ENCODE measurements at regions of chr1 and their contacts with region 1.

Region 1: DNA sequence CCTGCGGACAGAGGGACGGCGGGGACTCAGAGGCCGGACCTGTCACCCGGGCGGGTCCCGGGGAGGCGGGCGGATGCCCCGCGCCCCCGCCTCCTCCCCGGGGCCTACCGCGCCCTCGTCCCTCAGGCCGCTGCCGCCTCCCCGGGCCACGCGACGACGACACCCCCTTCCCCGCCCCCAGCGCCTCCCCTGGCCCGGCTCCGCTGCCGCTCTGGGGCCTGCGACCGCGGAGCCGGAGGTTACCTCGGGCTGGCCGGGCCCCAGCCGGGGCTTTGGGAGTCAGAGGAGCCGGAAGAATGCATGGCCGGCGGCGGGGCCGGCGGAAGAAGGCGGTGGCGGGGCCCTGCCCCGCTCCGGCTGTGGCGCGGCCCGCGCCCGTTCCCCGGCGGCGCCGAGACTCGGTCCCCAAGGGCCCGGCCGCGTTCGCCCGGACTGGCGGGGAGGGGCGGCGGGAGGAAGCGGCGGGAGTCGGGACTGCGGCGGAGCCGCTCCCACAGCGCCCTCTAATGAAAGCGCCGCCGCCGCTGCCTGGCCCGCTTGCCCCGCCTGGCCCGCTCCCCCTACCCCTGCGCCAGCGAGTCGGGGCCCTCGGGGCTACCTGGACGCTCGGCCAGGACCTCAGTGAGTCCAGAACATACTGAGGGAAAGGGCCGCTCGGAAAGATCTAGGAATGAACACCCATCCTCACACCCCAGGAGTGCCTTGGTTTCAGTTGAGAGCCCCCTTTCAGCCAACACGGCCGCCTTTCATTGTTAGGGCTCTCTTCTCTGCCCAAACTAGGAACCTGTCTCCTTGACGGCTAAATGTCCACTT is at the start of gene LPGAT1:
- DNase-seq: peak; percentile 84
- H3K4me3 ChIP-seq: peak within 1 kb of the TSS; percentile 45 to 97 (median 92)
- H3K27ac ChIP-seq: peak within 1 kb of the TSS; percentile 83 to 92 (median 90)
- H3K4me1 ChIP-seq: peaks cover 0 to 44% (median 34%) of the 10 kb centered on the region in 4 donors
- H3K27me3 ChIP-seq: no peaks in the 10 kb centered on the region
- CTCF ChIP-seq: peak in 3 of 4 experiments; percentile 26 to 75 (median 32)
- EP300 ChIP-seq: no peak
- POLR2A ChIP-seq: no peak
- total RNA-seq, gene LPGAT1: 26.8 to 46.7 (median 37.4) TPM

Region 2: GRCh38 chr1:211258756-211259637 is 571.5 kb before region 1 on chr1 and contains the start of gene RCOR3:
- intact Hi-C with region 1: loop called (anchors 5 kb)
- DNase-seq: peak; percentile 97
- H3K4me3 ChIP-seq: peak within 1 kb of the TSS; percentile 75 to 99 (median 94)
- H3K27ac ChIP-seq: peak within 1 kb of the TSS; percentile 99 to 100 (median 100)
- H3K4me1 ChIP-seq: peaks cover 0 to 40% (median 32%) of the 10 kb centered on the region in 4 donors
- H3K27me3 ChIP-seq: no peaks in the 10 kb centered on the region
- CTCF ChIP-seq: peak in 1 of 4 experiments; percentile 47
- EP300 ChIP-seq: peak in 1 of 4 donors; percentile 12
- POLR2A ChIP-seq: peak; percentile 77 to 85
- total RNA-seq, gene RCOR3: 40.7 to 60.3 (median 55.7) TPM

Region 3: DNA sequence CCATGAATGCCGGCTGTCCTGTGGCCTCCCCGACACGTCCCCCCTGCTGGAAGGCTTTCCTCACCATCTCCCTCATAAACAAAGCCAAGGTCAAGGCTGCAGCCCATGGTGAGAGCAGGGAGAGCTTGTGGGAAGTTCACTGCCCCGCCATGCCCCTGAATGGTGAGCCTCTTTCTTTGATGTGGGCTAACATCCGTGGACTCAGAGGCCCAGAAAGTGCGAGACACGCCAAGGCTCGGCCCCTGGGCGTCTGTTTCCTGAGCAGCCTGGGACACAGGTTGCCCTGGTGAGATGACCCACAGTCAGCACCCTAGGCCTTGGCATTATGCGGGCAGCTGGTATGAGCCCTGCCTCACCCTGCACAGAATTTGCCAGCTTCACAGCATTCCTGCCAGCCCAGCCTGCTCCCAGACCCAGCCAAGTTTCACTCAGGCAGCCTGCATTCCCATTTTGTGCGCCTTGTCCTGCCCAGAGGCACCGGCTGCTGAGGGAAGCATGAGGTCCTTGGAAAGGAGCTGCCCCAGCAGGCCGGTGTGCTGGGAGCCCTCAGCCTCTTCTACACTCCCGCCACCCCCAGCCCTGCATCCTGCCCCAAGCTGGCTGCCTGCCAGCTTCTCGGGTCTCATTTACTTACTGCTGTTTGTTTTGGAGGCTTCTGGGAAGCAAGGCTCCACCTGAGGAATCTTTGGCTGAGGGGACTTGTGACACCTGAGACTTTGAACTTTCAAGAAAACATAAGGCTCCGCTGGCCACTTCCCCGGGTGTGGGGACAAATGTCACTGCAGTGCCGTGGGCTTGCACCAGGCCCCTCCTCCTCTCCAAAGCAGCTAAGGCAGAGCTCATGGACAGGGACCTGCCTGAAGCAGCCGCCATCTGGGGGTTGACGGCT is 187.0 kb before region 1 on chr1:
- intact Hi-C with region 1: no loop called
- DNase-seq: no peak
- H3K4me3 ChIP-seq: no peak overlapping the region
- H3K27ac ChIP-seq: peak overlapping the region in 2 of 4 donors; percentile 23 to 58
- H3K4me1 ChIP-seq: peaks cover 0 to 10% (median 8%) of the 10 kb centered on the region in 4 donors
- H3K27me3 ChIP-seq: no peaks in the 10 kb centered on the region
- CTCF ChIP-seq: no peak
- EP300 ChIP-seq: no peak
- POLR2A ChIP-seq: no peak

Region 4: GRCh38 chr1:211680752-211681327 is 149.7 kb before region 1 on chr1:
- intact Hi-C with region 1: loop called (anchors 2 kb)
- DNase-seq: peak; percentile 78
- H3K4me3 ChIP-seq: no peak overlapping the region
- H3K27ac ChIP-seq: no peak overlapping the region
- H3K4me1 ChIP-seq: peaks cover 0 to 3% (median 3%) of the 10 kb centered on the region in 4 donors
- H3K27me3 ChIP-seq: no peaks in the 10 kb centered on the region
- CTCF ChIP-seq: peak; percentile 55 to 70 (median 66)
- EP300 ChIP-seq: no peak
- POLR2A ChIP-seq: no peak

Region 5: GRCh38 chr1:211698161-211699026 is 132.1 kb before region 1 on chr1:
- intact Hi-C with region 1: loop called (anchors 1 kb)
- DNase-seq: peak; percentile 79
- H3K4me3 ChIP-seq: peak overlapping the region in 2 of 4 donors; percentile 18 to 30
- H3K27ac ChIP-seq: no peak overlapping the region
- H3K4me1 ChIP-seq: peaks cover 0 to 10% (median 5%) of the 10 kb centered on the region in 4 donors
- H3K27me3 ChIP-seq: peaks cover 0 to 6% (median 0%) of the 10 kb centered on the region in 3 donors
- CTCF ChIP-seq: peak; percentile 40 to 85 (median 84)
- EP300 ChIP-seq: no peak
- POLR2A ChIP-seq: no peak